Sciatic nerve (tissue), 2 donors: ENCODE measurements at regions of chr4 and their contacts with region 1.

Region 1: GRCh38 chr4:44186096-44186849 is 262.3 kb downstream of the KCTD8 start:
- DNase-seq: no peak
- ATAC-seq: no peak

Region 2: GRCh38 chr4:42995343-42995944 is 1190.8 kb before region 1 on chr4:
- intact Hi-C with region 1: loop called (anchors 5 kb)
- DNase-seq: no peak
- ATAC-seq: no peak

Region 3: DNA sequence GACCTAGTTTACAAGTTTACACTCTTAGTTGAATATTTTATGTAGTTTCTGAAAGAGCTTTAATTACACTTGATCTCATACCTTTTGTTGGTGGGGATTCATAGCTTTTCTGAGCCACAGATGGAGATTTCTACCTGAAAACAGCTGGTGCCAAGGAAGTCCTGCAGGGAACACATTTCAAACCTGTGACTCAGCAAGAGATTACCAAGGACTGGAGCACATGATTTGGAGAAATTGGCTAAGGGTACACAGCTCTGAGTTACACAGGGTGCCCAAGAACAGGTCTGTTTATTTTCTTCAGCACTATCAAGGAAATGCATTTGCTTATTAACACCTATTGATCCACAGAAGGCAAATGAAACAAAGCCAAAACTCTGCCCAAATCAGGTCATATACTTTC is 429.1 kb before region 1 on chr4:
- intact Hi-C with region 1: no loop called
- DNase-seq: no peak
- ATAC-seq: no peak